ENCODE measurements at regions of chr1 and their contacts with region 1.

Region 1: DNA sequence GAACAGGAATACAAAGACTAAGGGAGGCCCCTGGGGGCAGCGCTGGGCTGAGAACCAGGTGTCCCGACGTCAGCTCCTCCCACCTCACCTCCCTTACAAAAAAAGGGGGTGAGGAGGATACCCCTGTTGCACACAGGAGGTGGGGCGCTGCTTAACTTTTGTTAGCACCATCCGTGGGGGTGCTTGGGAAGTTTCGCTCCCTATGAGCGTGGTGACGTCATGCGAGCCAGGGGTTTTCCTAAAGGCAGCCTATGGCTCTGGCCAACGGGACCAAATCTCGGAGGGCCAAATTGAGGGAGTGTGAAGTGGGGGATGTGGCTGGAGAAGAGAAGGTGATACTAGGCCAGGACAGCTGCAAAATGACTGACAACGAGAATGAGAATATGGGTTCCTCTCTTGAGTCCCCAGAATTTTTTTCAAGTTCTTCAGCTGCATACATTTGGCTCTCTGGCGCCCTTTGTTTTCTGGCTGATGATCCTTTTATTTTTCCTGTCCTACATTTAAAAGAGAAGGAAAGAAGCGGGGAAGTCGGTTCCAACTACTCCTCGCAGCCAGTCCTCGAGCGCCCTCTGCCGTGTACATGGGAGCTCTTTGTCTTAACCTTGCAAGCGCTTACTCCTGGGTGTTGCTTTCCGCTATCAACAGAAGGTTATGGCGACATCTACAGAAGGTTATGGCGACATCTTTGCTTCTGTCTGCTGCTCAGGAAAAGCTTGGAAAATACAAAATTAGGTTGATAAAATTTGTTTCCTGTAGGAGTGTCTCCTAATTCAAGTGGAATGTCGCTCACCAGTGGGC is 48.0 kb upstream of the ZC3H11B start:
- DNase-seq: peak; percentile 87 to 95 (median 89)
- ATAC-seq: peak; percentile 70 to 91 (median 88)
- H3K4me3 ChIP-seq: peak overlapping the region in 8 of 12 donors; percentile 13 to 35 (median 28)
- H3K27ac ChIP-seq: peak overlapping the region in 3 of 12 donors; percentile 3 to 8 (median 6)
- H3K4me1 ChIP-seq: peaks cover 0 to 31% (median 13%) of the 10 kb centered on the region in 12 donors
- H3K27me3 ChIP-seq: peaks cover 0 to 2% (median 0%) of the 10 kb centered on the region in 9 donors
- CTCF ChIP-seq: peak; percentile 68 to 90 (median 79)
- POLR2A ChIP-seq: no peak

Region 2: DNA sequence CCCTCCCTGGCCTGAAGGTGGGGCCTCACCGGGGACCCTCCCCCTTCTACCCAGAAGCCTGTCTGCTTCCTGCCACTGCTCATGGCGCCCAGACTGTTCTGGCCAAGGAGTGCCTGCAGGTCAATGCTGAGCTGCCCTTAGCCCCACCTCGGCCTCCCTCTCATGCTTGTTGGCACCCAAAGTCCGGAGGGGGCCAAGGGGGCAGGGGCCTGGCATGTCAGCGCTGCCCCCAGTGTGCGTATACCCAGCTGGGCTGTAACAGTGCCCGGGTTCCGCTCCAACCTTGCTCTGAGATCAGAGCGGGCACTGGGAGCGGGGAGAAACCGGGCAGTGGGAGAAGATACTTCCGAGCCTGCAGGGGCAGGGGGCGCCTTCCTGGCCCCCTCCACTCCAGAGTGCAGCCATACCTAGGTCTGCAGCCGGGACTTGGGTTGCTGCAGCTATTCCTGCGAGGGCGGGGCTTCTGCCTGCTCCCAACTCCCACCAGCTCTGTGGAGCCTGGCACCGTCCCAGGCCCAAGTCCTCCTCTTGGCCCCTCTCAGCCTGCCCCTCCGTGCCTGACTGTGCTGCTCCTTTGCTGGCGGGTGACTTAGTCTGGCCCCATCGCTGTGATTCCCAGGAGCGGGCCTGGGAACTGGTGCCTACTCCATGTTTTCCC is 1337.2 kb before region 1 on chr1:
- intact Hi-C with region 1: loop called in 1 of 10 experiments (anchors 10 kb)
- DNase-seq: peak in 1 of 5 donors; percentile 59
- ATAC-seq: peak in 2 of 4 donors; percentile 11 to 49
- H3K4me3 ChIP-seq: no peak overlapping the region
- H3K27ac ChIP-seq: no peak overlapping the region
- H3K4me1 ChIP-seq: no peaks in the 10 kb centered on the region
- H3K27me3 ChIP-seq: no peaks in the 10 kb centered on the region
- CTCF ChIP-seq: no peak
- POLR2A ChIP-seq: no peak

Region 3: GRCh38 chr1:219209578-219209977 is 451.3 kb before region 1 on chr1:
- intact Hi-C with region 1: loop called in 2 of 10 experiments (anchors 5 to 10 kb)
- DNase-seq: no peak
- ATAC-seq: peak in 3 of 4 donors; percentile 68 to 81 (median 80)
- H3K4me3 ChIP-seq: no peak overlapping the region
- H3K27ac ChIP-seq: peak overlapping the region in 1 of 12 donors; percentile 25
- H3K4me1 ChIP-seq: peaks cover 0 to under 1% (median 0%) of the 10 kb centered on the region in 12 donors
- H3K27me3 ChIP-seq: no peaks in the 10 kb centered on the region
- CTCF ChIP-seq: no peak
- POLR2A ChIP-seq: no peak

Region 4: DNA sequence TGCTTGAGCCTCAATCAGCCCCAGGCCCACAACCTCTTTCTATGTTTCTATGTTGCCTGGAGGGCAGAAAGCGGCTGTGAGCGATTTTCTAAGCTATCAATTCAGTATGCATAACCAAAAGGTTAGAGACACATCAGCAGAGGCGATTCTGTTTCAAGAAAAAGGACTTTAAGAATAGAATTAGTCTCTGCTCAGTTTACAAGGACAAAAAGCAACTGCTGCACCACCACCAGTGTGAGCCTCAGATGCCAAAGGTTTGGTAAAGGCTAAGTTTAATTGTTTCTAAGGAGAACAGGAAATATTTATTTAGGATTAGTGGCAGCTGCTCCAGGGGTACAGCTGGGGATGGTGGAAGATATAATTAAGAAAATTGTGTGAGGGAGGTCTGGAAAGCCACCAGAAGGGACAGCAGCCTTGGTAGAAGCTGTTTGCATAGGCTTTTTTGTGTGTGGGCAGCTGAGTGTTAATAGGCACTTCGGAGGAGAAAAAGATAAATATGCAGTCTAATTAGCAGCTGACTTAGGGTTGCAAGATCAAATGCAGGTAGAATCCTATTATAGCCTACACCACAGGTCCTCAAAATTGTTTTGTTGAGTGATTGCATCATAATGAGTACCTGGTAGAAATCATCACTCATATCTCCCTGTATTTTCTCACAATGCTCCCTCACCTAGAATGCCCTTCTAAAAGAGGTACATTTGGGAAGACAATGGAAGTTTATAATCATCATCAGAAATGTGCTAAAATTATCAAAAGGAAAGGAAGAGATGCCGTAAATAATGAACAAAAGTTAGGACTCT is 83.7 kb before region 1 on chr1:
- intact Hi-C with region 1: loop called in 2 of 10 experiments (anchors 5 kb)
- DNase-seq: no peak
- ATAC-seq: no peak
- H3K4me3 ChIP-seq: no peak overlapping the region
- H3K27ac ChIP-seq: no peak overlapping the region
- H3K4me1 ChIP-seq: peaks cover 0 to 12% (median 5%) of the 10 kb centered on the region in 12 donors
- H3K27me3 ChIP-seq: no peaks in the 10 kb centered on the region
- CTCF ChIP-seq: no peak
- POLR2A ChIP-seq: no peak

Region 5: DNA sequence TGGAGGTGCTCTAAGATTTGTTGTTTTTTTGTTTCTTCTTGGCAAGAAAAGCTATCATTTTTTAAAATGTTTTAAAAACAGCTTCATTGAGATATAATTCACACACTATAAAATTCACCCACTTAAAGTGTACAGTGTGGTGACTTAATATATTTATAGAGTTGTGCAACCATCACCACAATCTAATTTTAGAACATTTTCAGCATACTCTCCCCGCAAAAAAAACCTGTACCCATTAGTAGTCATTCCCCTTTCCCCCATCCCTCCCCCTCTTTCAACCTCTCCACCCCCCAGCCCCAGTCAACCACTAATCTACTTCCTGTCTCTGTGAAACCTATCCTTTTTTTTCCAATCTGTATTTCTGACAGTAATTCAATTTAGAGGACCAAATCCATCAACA is 78.6 kb before region 1 on chr1:
- intact Hi-C with region 1: loop called in 2 of 10 experiments (anchors 5 kb)
- DNase-seq: no peak
- ATAC-seq: peak in 3 of 4 donors; percentile 46 to 69 (median 59)
- H3K4me3 ChIP-seq: no peak overlapping the region
- H3K27ac ChIP-seq: peak overlapping the region in 2 of 12 donors; percentile 19 to 23
- H3K4me1 ChIP-seq: peaks cover 0 to 27% (median 7%) of the 10 kb centered on the region in 12 donors
- H3K27me3 ChIP-seq: no peaks in the 10 kb centered on the region
- CTCF ChIP-seq: no peak
- POLR2A ChIP-seq: no peak

Region 6: DNA sequence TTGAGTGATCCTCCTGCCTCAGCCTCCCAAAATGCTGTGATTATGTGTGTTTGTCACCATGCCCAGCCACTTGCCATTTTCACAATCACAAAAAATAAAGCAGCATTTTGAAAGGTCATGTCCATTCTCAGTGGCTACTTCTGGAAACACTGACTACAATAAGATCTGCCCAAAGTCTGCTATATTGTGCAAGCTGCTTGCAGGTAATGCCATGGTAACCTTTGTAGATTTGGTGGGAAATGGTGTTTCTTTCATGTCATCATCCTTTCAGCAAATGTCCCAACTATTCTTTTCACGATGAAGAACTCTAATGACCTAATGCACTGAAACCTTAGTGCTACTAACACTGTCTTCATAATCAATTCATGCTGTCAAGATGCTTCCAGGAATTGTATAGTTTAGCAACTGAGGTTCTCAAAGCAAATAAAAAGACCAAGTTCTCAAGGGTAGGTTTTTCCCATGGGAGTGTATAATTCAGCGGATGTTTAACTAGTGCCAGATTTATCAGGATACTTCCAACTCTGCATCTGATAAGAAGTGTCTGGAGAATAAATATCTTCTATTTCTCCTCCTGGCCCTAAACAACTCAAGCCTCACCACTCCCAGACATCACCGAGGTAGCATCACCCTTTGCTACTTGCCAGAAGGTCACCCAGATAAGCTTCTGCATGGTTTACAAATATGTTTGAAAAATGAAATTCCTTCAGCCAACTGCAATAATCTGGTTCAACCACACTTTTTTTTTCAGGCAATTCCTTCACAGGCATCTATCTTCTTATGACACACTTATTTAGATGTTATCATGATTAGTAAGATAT is 84.0 kb after region 1 on chr1:
- intact Hi-C with region 1: loop called in 2 of 10 experiments (anchors 5 kb)
- DNase-seq: no peak
- ATAC-seq: no peak
- H3K4me3 ChIP-seq: no peak overlapping the region
- H3K27ac ChIP-seq: no peak overlapping the region
- H3K4me1 ChIP-seq: peaks cover 0 to 26% (median 3%) of the 10 kb centered on the region in 12 donors
- H3K27me3 ChIP-seq: no peaks in the 10 kb centered on the region
- CTCF ChIP-seq: no peak
- POLR2A ChIP-seq: no peak

Region 7: DNA sequence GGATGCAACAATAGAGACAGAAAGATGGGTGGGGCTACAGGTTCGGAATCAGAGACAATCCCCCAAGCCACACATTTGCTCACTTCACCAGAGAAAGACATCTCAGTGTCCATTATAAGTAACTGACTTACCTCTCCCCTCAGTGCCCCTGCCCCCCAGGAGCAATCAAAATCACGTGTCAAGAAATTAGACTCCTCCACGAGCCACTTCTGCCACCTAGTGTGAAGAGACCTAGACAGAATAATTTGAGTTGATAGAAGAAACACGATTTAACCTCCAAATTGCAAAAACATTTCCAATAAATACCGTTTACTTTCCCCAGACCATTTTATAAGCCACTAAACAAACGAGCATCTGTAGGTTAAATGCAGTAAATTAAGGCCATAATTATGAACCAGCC is 144.3 kb after region 1 on chr1:
- intact Hi-C with region 1: loop called in 9 of 10 experiments (anchors 5 to 10 kb)
- DNase-seq: no peak
- ATAC-seq: no peak
- H3K4me3 ChIP-seq: no peak overlapping the region
- H3K27ac ChIP-seq: no peak overlapping the region
- H3K4me1 ChIP-seq: no peaks in the 10 kb centered on the region
- H3K27me3 ChIP-seq: peaks cover 0 to 3% (median 0%) of the 10 kb centered on the region in 9 donors
- CTCF ChIP-seq: peak in 11 of 12 donors; percentile 9 to 42 (median 24)
- POLR2A ChIP-seq: no peak